Caco-2 (cell line): ENCODE measurements at regions of chr3 and their contacts with region 1.

Region 1: DNA sequence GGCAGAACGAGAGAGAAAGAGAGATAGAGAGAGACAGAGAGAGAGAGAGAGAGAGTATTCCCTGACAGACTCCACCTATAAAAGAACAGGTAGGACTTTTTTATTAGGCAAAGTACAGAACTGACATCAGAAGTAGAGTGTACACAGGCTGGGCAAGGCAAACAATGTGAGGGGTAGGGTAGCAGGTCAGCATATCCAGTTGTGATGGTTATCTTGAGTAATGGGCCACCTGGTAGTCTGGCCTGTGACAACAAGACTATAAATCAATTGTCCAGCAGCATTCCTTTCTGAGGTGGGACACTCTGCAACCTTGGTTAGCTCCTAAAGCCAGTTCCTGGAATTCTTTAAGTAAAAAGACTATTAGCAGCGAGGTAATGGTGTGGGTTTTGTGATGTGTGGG is 14.9 kb upstream of the TMCC1 start:
- DNase-seq: peak; percentile 78 to 86
- H3K4me3 ChIP-seq: no peak overlapping the region
- H3K4me3 Mint-ChIP-seq: peak overlapping the region; percentile 6
- H3K27ac Mint-ChIP-seq: peak overlapping the region; percentile 82
- H3K4me1 ChIP-seq: peaks cover 11% of the 10 kb centered on the region
- H3K4me1 Mint-ChIP-seq: peaks cover 8% of the 10 kb centered on the region
- H3K27me3 ChIP-seq: no peaks in the 10 kb centered on the region
- H3K27me3 Mint-ChIP-seq: no peaks in the 10 kb centered on the region
- CTCF ChIP-seq: no peak

Region 2: DNA sequence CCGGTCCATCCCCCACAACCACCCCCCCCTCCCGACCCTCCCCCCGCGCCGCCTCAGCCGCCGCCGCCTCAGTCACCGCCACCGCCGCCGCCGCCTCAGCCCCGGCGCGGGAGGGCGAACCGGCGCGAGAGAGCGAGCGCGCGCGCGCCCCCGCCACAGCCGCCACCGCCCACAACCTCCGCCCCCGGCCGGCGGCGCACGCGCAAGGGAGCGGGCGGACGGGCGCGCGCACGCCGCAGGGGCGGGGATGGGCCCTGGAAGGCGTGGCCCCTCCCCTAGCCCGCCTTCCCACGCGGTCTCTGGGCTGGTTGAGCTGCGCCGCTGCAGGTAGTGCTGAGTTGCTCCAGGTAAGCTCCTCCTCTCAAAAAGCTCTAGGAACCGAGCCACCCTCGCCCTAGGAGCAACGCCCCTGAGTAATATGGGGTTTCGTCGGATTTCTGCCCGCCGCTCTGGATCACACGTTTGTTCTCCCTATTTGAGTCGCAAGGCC is 14.8 kb before region 1 on chr3 and contains the start of gene TMCC1:
- CTCF ChIA-PET with region 1: no interaction called
- POLR2A ChIA-PET with region 1: interaction called, 5 read pairs
- intact Hi-C with region 1: loop called (anchors 2 kb)
- DNase-seq: peak; percentile 94
- H3K4me3 ChIP-seq: peak within 1 kb of the TSS; percentile 97
- H3K4me3 Mint-ChIP-seq: peak within 1 kb of the TSS; percentile 92
- H3K27ac Mint-ChIP-seq: peak within 1 kb of the TSS; percentile 88
- H3K4me1 ChIP-seq: peaks cover 14% of the 10 kb centered on the region
- H3K4me1 Mint-ChIP-seq: peaks cover 14% of the 10 kb centered on the region
- H3K27me3 ChIP-seq: no peaks in the 10 kb centered on the region
- H3K27me3 Mint-ChIP-seq: no peaks in the 10 kb centered on the region
- CTCF ChIP-seq: no peak
- total RNA-seq, gene TMCC1: 26.0 and 27.8 TPM in 2 replicates

Region 3: GRCh38 chr3:129984125-129984524 is 75.7 kb after region 1 on chr3:
- CTCF ChIA-PET with region 1: no interaction called
- POLR2A ChIA-PET with region 1: no interaction called
- intact Hi-C with region 1: no loop called
- DNase-seq: no peak
- H3K4me3 ChIP-seq: no peak overlapping the region
- H3K4me3 Mint-ChIP-seq: no peak overlapping the region
- H3K27ac Mint-ChIP-seq: no peak overlapping the region
- H3K4me1 ChIP-seq: no peaks in the 10 kb centered on the region
- H3K4me1 Mint-ChIP-seq: no peaks in the 10 kb centered on the region
- H3K27me3 ChIP-seq: no peaks in the 10 kb centered on the region
- H3K27me3 Mint-ChIP-seq: peaks cover 4% of the 10 kb centered on the region
- CTCF ChIP-seq: no peak